Posterior vena cava (tissue), 2 donors: ENCODE measurements at regions of chr9 and their contacts with region 1.

Region 1: GRCh38 chr9:132541966-132542830 is 40.2 kb upstream of the BARHL1 start:
- DNase-seq: peak; percentile 67

Region 2: DNA sequence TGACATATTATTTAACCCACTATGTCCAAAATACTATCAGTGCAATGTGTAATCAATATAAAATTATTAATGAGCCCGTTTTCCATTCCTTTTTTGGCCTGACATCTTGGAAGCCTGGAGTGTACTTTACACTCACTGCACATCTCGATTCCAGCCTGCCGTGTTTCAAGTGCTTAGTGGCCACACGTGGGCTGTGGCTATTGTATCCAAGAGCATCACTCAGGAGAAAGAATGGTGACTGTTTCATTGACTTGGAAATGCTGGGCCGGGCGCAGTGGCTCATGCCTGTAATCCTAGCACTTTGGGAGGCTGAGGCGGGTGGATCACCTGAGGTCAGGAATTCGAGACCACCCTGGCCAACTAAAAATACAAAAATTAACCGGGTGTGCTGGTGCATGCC is 77.7 kb before region 1 on chr9:
- intact Hi-C with region 1: loop called in 1 of 2 experiments (anchors 2 kb)
- DNase-seq: no peak